GM12878 (cell line): ENCODE measurements at regions of chr5 and their contacts with region 1.

Region 1: DNA sequence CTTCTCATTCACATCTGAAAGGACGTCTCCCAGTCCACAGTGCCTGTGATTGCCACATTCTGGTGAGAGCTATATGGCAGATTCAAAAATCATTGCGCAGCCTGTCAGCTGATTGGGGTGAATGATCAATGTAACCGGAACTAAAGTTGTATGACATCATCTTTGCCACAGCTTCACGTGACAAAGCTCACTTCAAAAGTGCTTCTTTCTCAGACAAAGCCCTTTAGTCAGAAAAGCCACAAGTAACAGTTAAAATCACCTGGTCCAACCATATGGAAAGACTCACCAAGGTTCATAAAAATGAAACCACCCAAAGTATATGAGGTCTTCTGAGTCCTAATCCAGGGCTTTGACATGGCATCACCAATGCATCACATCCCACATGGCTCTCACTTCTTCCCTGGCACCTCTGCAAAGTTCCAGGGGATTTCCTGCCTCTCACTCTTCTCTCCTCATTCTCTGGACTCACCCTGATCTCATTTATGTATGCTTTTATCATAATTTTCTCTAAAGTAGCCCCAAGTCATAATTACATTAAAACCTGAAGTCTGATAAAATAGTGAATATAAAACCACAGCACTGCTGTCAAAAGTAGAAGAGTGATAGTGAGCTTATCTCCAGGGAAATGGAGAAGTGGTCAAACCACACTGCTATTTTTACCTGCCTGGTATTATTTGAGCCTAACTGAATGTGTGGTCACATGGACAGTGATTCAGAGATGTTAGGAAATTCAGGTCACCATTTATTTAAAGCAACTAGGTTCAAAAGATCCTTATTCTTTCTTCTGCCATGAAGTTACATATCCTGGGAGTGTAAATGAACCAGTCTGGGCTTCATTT is 193.1 kb upstream of the PTGER4 start:
- DNase-seq: peak; percentile 82
- ATAC-seq: peak; percentile 66
- H3K4me3 ChIP-seq: no peak overlapping the region; the same call in 1 of the 2 replicates
- H3K27ac ChIP-seq: peak overlapping the region; percentile 45; the same call in 1 of the 2 replicates
- H3K4me1 ChIP-seq: peaks cover 46% of the 10 kb centered on the region
- H3K27me3 ChIP-seq: no peaks in the 10 kb centered on the region
- CTCF ChIP-seq: no peak
- EP300 ChIP-seq: peak; percentile 73 to 89
- POLR2A ChIP-seq: no peak
- RAD21 ChIP-seq: no peak

Region 2: GRCh38 chr5:40223884-40224402 is 262.7 kb before region 1 on chr5:
- CTCF ChIA-PET with region 1: no interaction called
- POLR2A ChIA-PET with region 1: no interaction called
- RAD21 ChIA-PET with region 1: no interaction called
- SMC1A ChIA-PET with region 1: no interaction called
- in situ Hi-C with region 1: no loop called
- intact Hi-C with region 1: loop called (anchors 5 kb)
- DNase-seq: peak; percentile 85
- ATAC-seq: peak; percentile 88
- H3K4me3 ChIP-seq: no peak overlapping the region
- H3K27ac ChIP-seq: no peak overlapping the region
- H3K4me1 ChIP-seq: peaks cover 5% of the 10 kb centered on the region; the same call in 1 of the 2 replicates
- H3K27me3 ChIP-seq: no peaks in the 10 kb centered on the region
- CTCF ChIP-seq: no peak
- EP300 ChIP-seq: no peak
- POLR2A ChIP-seq: no peak
- RAD21 ChIP-seq: no peak

Region 3: GRCh38 chr5:40386289-40386688 is 100.4 kb before region 1 on chr5:
- CTCF ChIA-PET with region 1: no interaction called
- POLR2A ChIA-PET with region 1: no interaction called
- RAD21 ChIA-PET with region 1: interaction called, 4 read pairs
- SMC1A ChIA-PET with region 1: interaction called, 6 read pairs
- in situ Hi-C with region 1: loop called (anchors 5 kb)
- intact Hi-C with region 1: loop called (anchors 2 kb)
- DNase-seq: peak; percentile 62
- ATAC-seq: peak; percentile 89
- H3K4me3 ChIP-seq: no peak overlapping the region
- H3K27ac ChIP-seq: no peak overlapping the region
- H3K4me1 ChIP-seq: peaks cover 26% of the 10 kb centered on the region
- H3K27me3 ChIP-seq: no peaks in the 10 kb centered on the region
- CTCF ChIP-seq: no peak
- EP300 ChIP-seq: no peak
- POLR2A ChIP-seq: no peak
- RAD21 ChIP-seq: no peak

Region 4: DNA sequence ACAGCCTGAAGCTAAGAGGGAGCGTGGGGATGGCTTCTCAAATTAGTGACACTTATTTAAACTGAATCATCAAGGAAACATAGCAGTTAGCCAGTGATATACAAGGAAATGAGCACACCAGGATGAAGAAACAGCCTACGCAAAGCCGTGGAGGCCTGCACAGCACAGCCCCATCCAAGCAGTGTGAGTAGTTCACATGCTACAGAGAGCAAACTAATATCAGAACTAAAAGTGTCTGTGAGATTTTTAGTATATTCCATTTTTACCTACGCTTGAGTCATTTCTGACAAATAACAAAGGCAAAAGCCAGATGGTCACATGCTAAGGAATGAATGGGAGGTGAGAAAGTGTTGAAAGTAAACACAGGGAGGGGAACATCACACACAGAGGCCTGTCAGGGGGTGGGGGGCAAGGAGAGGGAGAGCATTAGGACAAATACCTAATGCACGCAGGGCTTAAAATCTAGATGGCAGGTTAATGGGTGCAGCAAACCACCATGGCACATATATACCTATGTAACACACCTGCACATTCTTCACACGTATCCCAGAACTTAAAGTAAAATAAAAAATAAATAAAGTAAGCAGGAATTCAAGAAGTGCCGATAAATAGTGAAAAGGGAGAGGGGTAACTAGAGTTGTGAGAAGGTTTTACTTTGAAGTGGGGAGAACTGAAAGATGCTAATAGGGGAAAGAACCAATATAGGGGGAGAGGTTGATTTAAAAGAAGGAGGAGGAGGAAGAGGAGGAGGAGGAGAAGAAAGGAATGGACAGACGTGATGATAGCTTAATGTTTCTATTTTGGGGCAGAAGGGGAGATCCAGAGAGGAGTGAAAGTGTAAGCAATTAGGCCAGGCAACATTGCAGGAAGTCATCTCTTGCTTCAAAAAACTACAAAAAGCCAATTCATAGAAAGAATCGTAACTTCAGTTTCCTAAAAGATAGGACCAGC is 92.1 kb after region 1 on chr5:
- CTCF ChIA-PET with region 1: no interaction called
- POLR2A ChIA-PET with region 1: no interaction called
- RAD21 ChIA-PET with region 1: no interaction called
- SMC1A ChIA-PET with region 1: interaction called, 3 read pairs
- in situ Hi-C with region 1: loop called (anchors 5 kb)
- intact Hi-C with region 1: loop called (anchors 2 kb)
- DNase-seq: peak; percentile 76
- ATAC-seq: peak; percentile 97
- H3K4me3 ChIP-seq: no peak overlapping the region
- H3K27ac ChIP-seq: no peak overlapping the region
- H3K4me1 ChIP-seq: peaks cover 11% of the 10 kb centered on the region; the same call in 1 of the 2 replicates
- H3K27me3 ChIP-seq: no peaks in the 10 kb centered on the region
- CTCF ChIP-seq: no peak
- EP300 ChIP-seq: peak; percentile 47 to 81; a peak in 2 of 4 replicates
- POLR2A ChIP-seq: no peak
- RAD21 ChIP-seq: peak; percentile 25; the same call in 1 of the 2 replicates

Region 5: GRCh38 chr5:40834849-40835787 is 348.5 kb after region 1 on chr5 and contains the start of gene RPL37:
- CTCF ChIA-PET with region 1: no interaction called
- POLR2A ChIA-PET with region 1: no interaction called
- RAD21 ChIA-PET with region 1: no interaction called
- SMC1A ChIA-PET with region 1: no interaction called
- in situ Hi-C with region 1: loop called (anchors 10 kb)
- intact Hi-C with region 1: loop called (anchors 10 kb)
- DNase-seq: peak; percentile 87
- ATAC-seq: peak; percentile 92
- H3K4me3 ChIP-seq: peak within 1 kb of the TSS; percentile 92
- H3K27ac ChIP-seq: peak within 1 kb of the TSS; percentile 97
- H3K4me1 ChIP-seq: peaks cover 11% of the 10 kb centered on the region
- H3K27me3 ChIP-seq: no peaks in the 10 kb centered on the region
- CTCF ChIP-seq: no peak
- EP300 ChIP-seq: no peak
- POLR2A ChIP-seq: peak; percentile 99
- RAD21 ChIP-seq: no peak
- polyA plus RNA-seq, gene RPL37: 2,699 to 2,779 TPM